ENCODE measurements at regions of chr12 and their contacts with region 1.

Region 1: DNA sequence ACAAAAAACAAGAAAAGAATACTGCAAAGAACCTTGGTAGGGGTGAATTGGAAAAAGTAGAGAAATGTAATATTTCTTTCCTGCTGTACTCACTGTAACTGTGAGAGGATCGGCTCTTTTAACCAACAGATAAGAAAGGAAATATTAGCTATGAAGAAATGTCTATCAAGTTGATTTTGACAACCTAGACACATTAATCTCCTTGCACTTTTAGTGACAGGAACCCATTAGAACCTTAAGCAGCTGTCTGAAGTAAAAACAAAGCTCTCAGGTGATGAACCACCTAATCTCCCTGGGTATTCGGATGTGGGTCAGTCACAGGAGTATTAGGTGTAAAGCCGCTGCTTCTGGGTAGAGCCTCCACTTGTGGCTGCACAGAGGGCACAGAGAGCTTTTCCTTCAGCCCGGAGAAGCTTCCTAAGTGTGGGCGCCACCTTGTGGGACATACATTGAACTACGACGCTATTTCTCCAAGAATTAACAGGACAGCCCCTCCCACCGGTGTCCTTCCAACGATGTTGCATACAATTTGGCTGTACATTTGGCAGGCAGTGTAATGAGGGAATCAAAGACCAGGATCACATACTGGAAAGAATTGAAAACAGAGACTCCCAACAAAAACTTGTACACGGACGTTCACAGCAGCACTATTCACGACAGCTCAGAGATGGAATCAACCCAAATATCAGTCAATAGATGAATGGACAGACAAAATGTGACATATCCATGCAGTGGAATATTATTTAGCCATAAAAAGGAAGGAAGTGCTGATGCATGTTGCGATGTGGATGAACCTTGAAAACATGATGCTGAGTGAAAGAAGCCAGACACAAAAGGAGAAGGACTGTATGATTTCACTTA is 28.9 kb upstream of the MAPKAPK5 start:
- DNase-seq: peak; percentile 78
- H3K4me3 Mint-ChIP-seq: no peak overlapping the region
- H3K27ac Mint-ChIP-seq: peak overlapping the region; percentile 56
- H3K4me1 Mint-ChIP-seq: peaks cover 16% of the 10 kb centered on the region
- H3K27me3 Mint-ChIP-seq: no peaks in the 10 kb centered on the region
- CTCF ChIP-seq: peak; percentile 75

Region 2: DNA sequence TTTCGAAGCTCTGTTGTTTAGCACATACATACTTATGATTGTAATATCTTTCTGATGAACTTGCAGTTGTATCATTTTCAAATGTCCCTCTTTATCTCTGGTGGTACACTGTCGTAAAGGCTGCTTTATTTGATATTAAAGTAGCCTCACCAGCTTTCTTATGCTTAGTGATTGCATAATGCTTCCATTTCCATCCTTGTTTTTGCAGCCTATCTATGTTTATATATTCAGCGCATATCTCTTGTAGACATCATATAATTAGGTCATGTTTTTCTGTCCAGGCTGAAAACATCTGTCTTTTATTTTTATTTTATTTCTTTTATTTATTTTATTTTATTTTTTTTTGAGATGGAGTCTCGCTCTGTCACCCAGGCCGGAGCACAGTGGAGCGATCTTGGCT is 92.7 kb before region 1 on chr12:
- CTCF ChIA-PET with region 1: no interaction called
- intact Hi-C with region 1: no loop called
- DNase-seq: no peak
- H3K4me3 Mint-ChIP-seq: no peak overlapping the region
- H3K27ac Mint-ChIP-seq: no peak overlapping the region
- H3K4me1 Mint-ChIP-seq: no peaks in the 10 kb centered on the region
- H3K27me3 Mint-ChIP-seq: no peaks in the 10 kb centered on the region
- CTCF ChIP-seq: no peak

Region 3: DNA sequence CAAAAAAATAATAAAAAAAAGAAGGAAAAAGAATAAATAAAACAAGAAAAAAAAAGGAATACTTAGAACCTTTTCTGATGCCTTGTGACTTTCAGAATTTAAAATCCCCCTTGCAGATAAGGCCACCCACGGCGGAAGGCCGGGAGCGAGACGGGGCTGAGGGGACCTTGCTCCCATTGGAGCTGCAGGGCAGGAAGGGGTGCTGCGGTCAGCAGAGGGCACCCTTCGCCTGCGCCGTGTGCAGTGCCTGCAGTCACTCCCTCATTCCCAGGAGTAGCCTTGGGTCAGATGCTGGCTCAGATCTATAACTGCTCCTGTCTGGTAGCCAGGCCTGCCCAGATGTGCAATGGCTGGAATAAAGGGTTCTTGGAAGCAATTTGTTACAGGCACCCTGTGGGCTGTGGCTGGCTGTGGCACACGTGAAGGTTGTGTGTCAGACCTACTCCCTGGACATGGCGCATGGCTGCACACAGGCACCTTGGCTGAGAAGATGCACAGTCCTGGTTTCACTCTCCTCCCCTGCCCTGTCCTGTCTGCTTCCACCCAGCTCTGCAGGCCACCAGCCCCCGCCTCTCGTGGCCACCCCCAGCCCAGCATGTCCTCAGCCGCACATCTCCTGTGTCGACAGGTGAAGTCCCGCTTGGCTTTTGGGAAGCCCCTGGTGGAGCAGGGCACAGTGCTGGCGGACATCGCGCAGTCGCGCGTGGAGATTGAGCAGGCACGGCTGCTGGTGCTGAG is 59.8 kb before region 1 on chr12:
- CTCF ChIA-PET with region 1: interaction called, 45 read pairs
- intact Hi-C with region 1: loop called (anchors 1 kb)
- DNase-seq: peak; percentile 72
- H3K4me3 Mint-ChIP-seq: no peak overlapping the region
- H3K27ac Mint-ChIP-seq: no peak overlapping the region
- H3K4me1 Mint-ChIP-seq: no peaks in the 10 kb centered on the region
- H3K27me3 Mint-ChIP-seq: no peaks in the 10 kb centered on the region
- CTCF ChIP-seq: peak; percentile 80

Region 4: GRCh38 chr12:111766608-111767361 is 46.3 kb before region 1 on chr12 and contains the start of gene ALDH2:
- CTCF ChIA-PET with region 1: interaction called, 8 read pairs
- intact Hi-C with region 1: loop called (anchors 5 kb)
- DNase-seq: peak; percentile 79
- H3K4me3 Mint-ChIP-seq: peak within 1 kb of the TSS; percentile 91
- H3K27ac Mint-ChIP-seq: peak within 1 kb of the TSS; percentile 85
- H3K4me1 Mint-ChIP-seq: peaks cover 22% of the 10 kb centered on the region
- H3K27me3 Mint-ChIP-seq: no peaks in the 10 kb centered on the region
- CTCF ChIP-seq: no peak
- total RNA-seq, gene ALDH2: 152 and 168 TPM in 2 replicates

Measured in Calu3 (cell line).